Activated B cell treated with CpG ODN at 0.5 μM for 24 hours (primary cell): ENCODE measurements at regions of chrX and their contacts with region 1.

Region 1: DNA sequence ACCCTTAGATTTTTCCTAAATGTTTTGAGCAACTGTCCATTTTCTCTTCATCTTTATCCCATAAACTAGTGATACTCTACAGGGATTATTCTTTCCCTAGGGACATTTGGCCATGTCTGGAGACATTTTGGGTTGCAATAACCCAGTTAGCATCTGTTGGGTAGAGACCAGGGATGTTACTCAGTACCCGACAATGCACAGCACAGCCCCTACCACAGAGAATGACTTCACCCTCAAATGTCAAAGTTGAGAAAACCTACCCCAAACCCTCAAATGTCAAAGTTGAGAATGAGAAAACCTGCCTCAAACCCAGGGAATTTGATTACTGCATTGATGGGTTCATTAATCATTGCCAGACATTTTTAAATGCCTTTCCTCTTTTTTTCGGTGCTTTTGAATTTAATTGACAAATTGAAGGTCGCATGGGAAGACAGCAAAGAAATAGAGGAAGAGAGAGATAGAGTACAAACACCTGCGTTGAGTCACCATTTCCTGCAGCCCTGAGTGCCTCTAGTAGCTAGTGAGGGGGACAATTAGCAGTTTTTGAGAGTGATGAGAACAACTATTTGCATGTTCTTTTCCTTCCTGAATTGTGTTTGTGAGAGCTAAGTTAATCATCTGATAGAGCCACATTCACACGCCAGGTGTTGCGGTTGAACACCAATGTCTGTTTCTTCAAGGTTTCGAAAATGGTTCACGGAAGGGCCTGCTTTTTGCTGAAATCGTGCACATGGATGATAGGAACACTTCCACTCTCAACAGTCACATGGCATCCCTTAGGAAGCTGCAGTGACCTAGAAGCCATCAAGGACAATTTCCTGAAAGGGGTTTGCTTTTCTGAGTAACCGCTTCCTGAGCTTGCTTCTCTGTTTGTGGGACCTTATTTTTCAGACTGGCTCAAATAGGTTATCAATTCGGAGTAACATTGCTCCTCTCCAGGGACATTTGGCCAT is 203.9 kb upstream of the VCX3A start:
- DNase-seq: peak; percentile 14
- ATAC-seq: peak; percentile 87
- H3K4me3 Mint-ChIP-seq: peak overlapping the region; percentile 15
- H3K27ac Mint-ChIP-seq: peak overlapping the region; percentile 74
- H3K4me1 Mint-ChIP-seq: peaks cover 26% of the 10 kb centered on the region
- H3K27me3 Mint-ChIP-seq: no peaks in the 10 kb centered on the region
- CTCF ChIP-seq: no peak

Region 2: GRCh38 chrX:7059214-7059838 is 320.5 kb after region 1 on chrX:
- CTCF ChIA-PET with region 1: no interaction called
- POLR2A ChIA-PET with region 1: no interaction called
- intact Hi-C with region 1: loop called (anchors 1 kb)
- DNase-seq: no peak
- ATAC-seq: peak; percentile 79
- H3K4me3 Mint-ChIP-seq: peak overlapping the region; percentile 33
- H3K27ac Mint-ChIP-seq: peak overlapping the region; percentile 70
- H3K4me1 Mint-ChIP-seq: peaks cover 63% of the 10 kb centered on the region
- H3K27me3 Mint-ChIP-seq: no peaks in the 10 kb centered on the region
- CTCF ChIP-seq: no peak

Region 3: DNA sequence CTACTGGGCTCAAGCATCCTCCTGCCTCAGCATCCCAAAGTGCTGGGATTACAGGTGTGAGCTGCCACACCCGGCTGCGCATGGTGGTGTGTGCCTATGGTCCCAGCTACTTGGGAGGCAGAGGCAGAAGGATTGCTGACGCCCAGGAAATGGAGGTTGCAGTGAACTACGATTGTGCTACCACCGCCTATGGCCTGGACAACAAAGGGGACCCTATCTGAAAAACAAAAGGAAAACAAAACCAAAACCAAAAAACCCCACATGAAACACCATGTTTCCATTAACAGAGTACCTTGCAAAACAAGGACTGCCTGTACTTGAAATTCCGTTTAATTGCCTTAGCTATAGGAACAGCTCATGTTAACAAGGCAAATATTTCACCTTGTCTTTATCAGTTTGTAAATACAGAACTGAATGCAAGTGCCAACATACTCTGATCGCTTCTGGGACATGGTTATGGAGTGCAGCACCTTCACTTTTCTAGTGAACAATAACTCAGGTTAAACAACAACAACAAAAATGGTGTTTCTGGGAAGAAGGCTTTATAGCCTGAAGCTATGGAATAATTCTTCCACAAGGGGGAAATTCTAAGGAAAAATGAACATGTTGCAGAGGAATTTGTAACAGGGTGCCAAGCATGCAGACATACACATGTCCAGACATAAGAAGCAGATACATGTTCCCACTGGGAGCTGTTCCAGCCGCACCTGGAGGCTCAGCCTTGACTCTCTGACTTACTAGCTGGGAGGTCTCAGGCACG is 335.5 kb after region 1 on chrX:
- CTCF ChIA-PET with region 1: no interaction called
- POLR2A ChIA-PET with region 1: no interaction called
- intact Hi-C with region 1: no loop called
- DNase-seq: no peak
- ATAC-seq: no peak
- H3K4me3 Mint-ChIP-seq: no peak overlapping the region
- H3K27ac Mint-ChIP-seq: no peak overlapping the region
- H3K4me1 Mint-ChIP-seq: peaks cover 23% of the 10 kb centered on the region
- H3K27me3 Mint-ChIP-seq: no peaks in the 10 kb centered on the region
- CTCF ChIP-seq: no peak

Region 4: DNA sequence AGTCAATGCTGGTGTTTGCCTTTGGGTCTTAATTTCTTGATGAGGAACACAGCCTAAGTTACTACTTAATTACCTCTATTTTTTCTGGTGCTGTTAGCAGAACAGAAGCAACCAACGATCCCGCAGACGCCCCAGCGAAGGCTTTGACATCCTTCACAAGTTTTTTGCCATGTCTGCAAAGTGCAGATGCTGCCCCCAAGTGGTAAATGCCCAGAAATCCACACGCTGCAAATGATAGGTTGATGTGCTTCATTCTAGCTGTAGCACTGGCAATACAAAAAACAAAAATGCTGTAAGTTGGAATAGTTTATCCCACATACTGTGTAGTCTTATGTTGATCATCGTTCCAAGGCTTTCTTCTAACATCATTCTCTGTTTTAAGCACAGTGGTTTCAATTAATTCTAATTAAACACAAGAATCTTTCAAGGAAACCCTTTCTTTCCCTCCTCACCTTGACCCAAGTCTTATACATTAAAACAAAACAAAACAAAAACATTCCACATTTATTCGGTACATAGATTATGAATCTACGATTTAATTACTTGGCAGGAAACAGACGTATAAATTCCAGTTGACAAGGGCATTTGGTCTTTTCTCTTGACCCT is 1187.2 kb after region 1 on chrX:
- CTCF ChIA-PET with region 1: no interaction called
- POLR2A ChIA-PET with region 1: no interaction called
- intact Hi-C with region 1: loop called (anchors 2 kb)
- DNase-seq: no peak
- ATAC-seq: no peak
- H3K4me3 Mint-ChIP-seq: peak overlapping the region; percentile 48
- H3K27ac Mint-ChIP-seq: peak overlapping the region; percentile 61
- H3K4me1 Mint-ChIP-seq: peaks cover 17% of the 10 kb centered on the region
- H3K27me3 Mint-ChIP-seq: no peaks in the 10 kb centered on the region
- CTCF ChIP-seq: no peak